ENCODE measurements at regions of chr4 and their contacts with region 1.

Region 1: DNA sequence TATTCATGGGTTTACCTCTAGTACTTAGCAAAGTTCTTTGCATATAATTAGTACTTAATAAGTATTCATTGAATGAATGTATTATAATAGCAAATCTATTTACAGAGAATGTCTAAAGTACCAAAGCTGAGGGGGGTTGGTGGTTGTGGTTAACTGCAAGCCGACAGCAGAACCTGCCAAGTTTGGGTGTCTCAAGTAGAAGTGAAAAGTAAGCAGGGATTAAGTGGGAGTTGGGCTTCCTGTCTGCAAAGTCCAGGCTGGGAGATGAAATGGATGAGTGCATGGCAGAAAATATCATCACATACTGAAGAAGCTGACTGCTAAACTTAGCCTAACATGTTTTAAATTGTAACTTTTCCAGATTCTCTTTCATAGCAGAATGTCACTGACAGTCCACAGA is 169.6 kb downstream of the CAMK2D start:
- DNase-seq: no peak
- H3K4me3 Mint-ChIP-seq: no peak overlapping the region
- H3K27ac Mint-ChIP-seq: no peak overlapping the region
- H3K4me1 Mint-ChIP-seq: peaks cover 56% of the 10 kb centered on the region
- H3K27me3 Mint-ChIP-seq: no peaks in the 10 kb centered on the region

Region 2: GRCh38 chr4:113574636-113575103 is 17.3 kb before region 1 on chr4:
- intact Hi-C with region 1: loop called (anchors 2 kb)
- DNase-seq: no peak
- H3K4me3 Mint-ChIP-seq: no peak overlapping the region
- H3K27ac Mint-ChIP-seq: no peak overlapping the region
- H3K4me1 Mint-ChIP-seq: peaks cover 71% of the 10 kb centered on the region
- H3K27me3 Mint-ChIP-seq: no peaks in the 10 kb centered on the region

Measured in activated T-helper 1 cell treated with anti-CD3 and anti-CD28 coated beads, Interleukin-12 subunit alpha, Interleukin-12 subunit beta, Interleukin-2, Interleukin-4 antibody, amounts not matched to agents 30 ng/mL and 10 ng/mL and 1 ng/mL, durations not matched to agents 14 hours and 24 hours and 36 hours (primary cell).